Common myeloid progenitor, CD34-positive (primary cell): ENCODE measurements at regions of chr7 and their contacts with region 1.

Region 1: GRCh38 chr7:31373337-31374289 is 33.1 kb upstream of the NEUROD6 start:
- DNase-seq: peak; percentile 44 to 76 (median 67)
- H3K4me3 ChIP-seq: no peak overlapping the region
- H3K27ac ChIP-seq: no peak overlapping the region
- H3K4me1 ChIP-seq: no peaks in the 10 kb centered on the region
- H3K27me3 ChIP-seq: peaks cover 0 to 8% (median 2%) of the 10 kb centered on the region in 5 experiments

Region 2: GRCh38 chr7:31488562-31489203 is 115.1 kb after region 1 on chr7:
- CTCF ChIA-PET with region 1: interaction called, 13 read pairs
- POLR2A ChIA-PET with region 1: no interaction called
- DNase-seq: peak; percentile 47 to 66 (median 56)
- H3K4me3 ChIP-seq: no peak overlapping the region
- H3K27ac ChIP-seq: no peak overlapping the region
- H3K4me1 ChIP-seq: no peaks in the 10 kb centered on the region
- H3K27me3 ChIP-seq: peaks cover 0 to 7% (median 0%) of the 10 kb centered on the region in 5 experiments

Region 3: DNA sequence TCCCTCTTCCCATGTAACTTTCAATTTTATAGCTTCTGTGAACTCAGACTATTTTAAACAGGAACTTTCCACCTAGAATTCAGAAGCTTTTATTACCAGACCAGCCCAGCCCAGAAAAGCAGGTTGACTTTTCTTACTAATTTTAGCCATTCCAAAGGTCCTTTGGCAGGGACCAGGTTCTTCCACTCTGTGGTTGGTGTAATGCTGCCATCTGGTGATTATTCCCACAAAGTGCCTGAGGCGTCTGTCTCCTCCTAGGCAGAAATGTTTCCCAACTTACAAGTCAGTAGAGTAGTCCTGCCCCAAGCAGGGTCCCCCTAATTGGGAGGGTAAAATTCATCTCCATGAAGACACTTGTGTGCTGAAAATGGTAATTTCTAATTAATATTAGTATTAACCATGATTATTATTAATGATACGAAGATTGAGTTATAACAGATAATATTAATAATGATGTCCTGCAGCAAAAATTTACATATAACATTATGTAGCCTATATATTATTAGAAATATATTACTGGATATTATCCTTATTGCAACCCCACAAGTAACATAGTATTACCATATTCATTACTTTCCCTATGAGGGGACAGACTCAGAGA is 260.4 kb after region 1 on chr7:
- CTCF ChIA-PET with region 1: interaction called, 21 read pairs
- POLR2A ChIA-PET with region 1: no interaction called
- DNase-seq: peak; percentile 20 to 54 (median 32)
- H3K4me3 ChIP-seq: no peak overlapping the region
- H3K27ac ChIP-seq: no peak overlapping the region
- H3K4me1 ChIP-seq: no peaks in the 10 kb centered on the region
- H3K27me3 ChIP-seq: no peaks in the 10 kb centered on the region